Calu3 (cell line): ENCODE measurements at regions of chr1 and their contacts with region 1.

Region 1: DNA sequence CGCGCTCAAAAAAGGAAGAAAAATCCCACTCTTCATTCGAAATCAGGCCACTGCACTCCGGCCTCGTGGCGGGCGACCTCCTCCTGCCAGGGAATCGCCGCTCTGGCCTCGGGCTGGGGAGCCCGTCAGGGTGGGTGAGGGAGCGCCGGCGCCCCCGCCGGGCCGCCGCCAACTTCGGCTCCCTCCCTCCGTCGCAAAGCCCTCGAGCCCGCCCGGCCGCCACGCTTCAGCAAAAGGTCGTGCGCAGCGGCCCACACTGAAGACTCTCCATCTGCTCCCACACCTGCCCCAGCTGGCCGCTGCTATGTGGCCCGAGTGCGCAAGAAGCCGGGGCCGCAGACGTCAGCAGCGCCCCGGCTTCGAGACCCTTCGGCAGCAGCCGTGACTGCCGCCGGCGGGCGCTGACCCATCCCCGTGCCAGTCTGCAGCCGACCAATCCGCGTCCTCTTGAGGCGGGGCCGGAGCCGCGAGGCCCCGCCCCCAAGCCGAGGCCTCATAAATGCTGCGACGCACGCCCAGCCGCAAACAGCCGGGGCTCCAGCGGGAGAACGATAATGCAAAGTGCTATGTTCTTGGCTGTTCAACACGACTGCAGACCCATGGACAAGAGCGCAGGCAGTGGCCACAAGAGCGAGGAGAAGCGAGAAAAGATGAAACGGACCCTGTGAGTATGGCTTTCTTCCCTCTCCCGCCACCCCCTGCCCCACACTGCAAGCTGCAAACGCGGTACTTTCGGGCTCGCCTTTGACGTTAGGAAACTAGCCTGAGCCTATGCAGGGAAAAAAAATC is at the start of gene RGS2:
- DNase-seq: peak; percentile 94
- H3K4me3 Mint-ChIP-seq: peak within 1 kb of the TSS; percentile 99
- H3K27ac Mint-ChIP-seq: peak within 1 kb of the TSS; percentile 99
- H3K4me1 Mint-ChIP-seq: peaks cover 37% of the 10 kb centered on the region
- H3K27me3 Mint-ChIP-seq: no peaks in the 10 kb centered on the region
- CTCF ChIP-seq: no peak
- total RNA-seq, gene RGS2: 46.9 and 93.2 TPM in 2 replicates

Region 2: DNA sequence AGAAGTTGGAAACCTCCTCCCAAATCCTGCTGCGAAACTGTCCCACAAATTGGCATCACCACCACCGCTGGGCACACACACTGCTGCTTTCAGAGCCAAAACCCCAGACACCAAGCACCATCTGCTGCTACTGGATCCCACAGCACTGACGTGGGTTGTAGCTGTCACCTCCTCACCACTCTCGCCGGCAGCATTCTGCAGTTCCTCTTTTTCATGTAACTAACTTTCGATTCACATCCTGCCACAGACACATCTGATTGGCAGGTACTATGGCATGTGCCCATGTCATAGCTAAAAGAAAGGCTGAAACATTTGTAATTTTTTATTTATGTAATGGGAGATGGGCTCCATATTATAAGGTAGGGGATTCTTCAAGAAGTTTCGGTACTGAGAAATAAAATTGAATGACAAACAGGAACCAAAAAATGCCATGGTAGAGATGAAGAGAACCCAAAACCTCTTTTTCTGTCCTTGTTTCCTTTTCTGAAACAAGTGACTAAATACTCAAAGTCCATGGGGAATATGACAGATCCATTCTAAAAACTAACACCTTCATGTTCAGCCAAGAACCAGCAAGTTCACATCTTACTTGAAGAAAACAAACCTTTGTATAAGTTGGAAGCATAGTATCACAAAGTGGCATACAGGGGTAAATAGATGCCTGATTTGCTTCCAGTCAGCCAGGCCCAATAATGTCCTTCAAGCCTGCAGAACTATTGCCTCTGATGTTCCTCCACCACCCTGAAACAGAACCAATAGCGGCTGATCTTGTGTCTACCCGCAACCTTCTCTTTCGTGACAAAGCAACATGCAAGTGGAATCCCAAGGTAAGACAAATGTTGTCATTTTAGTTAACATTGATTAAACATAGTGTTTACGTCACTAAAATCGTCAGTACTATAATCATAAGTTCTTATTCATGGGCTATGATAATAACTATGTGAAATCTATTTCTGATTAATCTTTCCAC is 199.3 kb before region 1 on chr1:
- CTCF ChIA-PET with region 1: interaction called, 13 read pairs
- intact Hi-C with region 1: loop called (anchors 5 kb)
- DNase-seq: no peak
- H3K4me3 Mint-ChIP-seq: no peak overlapping the region
- H3K27ac Mint-ChIP-seq: no peak overlapping the region
- H3K4me1 Mint-ChIP-seq: peaks cover 9% of the 10 kb centered on the region
- H3K27me3 Mint-ChIP-seq: no peaks in the 10 kb centered on the region
- CTCF ChIP-seq: no peak

Region 3: GRCh38 chr1:192700834-192701271 is 107.9 kb before region 1 on chr1:
- CTCF ChIA-PET with region 1: interaction called, 16 read pairs
- intact Hi-C with region 1: loop called (anchors 1 kb)
- DNase-seq: peak; percentile 38
- H3K4me3 Mint-ChIP-seq: no peak overlapping the region
- H3K27ac Mint-ChIP-seq: peak overlapping the region; percentile 86
- H3K4me1 Mint-ChIP-seq: peaks cover 14% of the 10 kb centered on the region
- H3K27me3 Mint-ChIP-seq: no peaks in the 10 kb centered on the region
- CTCF ChIP-seq: no peak

Region 4: GRCh38 chr1:192766009-192766625 is 42.6 kb before region 1 on chr1:
- CTCF ChIA-PET with region 1: no interaction called
- intact Hi-C with region 1: no loop called
- DNase-seq: no peak
- H3K4me3 Mint-ChIP-seq: no peak overlapping the region
- H3K27ac Mint-ChIP-seq: no peak overlapping the region
- H3K4me1 Mint-ChIP-seq: peaks cover 27% of the 10 kb centered on the region
- H3K27me3 Mint-ChIP-seq: no peaks in the 10 kb centered on the region
- CTCF ChIP-seq: no peak

Region 5: DNA sequence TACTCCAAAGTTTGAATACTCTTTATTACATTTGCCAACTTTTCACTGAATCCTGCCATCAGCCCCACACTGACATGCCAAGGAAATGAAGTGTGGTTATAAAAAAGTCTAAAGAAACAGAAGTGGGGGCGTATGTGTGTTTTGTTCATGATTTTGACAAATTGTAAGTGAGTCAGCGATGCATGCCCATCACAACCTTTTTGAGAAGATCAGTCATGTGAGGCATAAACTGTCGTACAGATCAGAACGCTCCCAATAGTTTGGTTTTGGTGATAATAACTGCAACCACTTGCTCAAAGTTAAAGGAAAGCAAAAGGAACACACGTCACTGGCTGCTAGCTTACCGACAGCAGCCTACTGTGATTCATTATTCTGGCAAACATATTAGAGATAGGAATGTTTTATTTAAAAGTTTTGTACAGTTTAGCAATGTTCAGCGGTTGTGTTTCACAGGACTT is 95.8 kb after region 1 on chr1:
- CTCF ChIA-PET with region 1: interaction called, 8 read pairs
- intact Hi-C with region 1: loop called (anchors 2 kb)
- DNase-seq: peak; percentile 10
- H3K4me3 Mint-ChIP-seq: peak overlapping the region; percentile 13
- H3K27ac Mint-ChIP-seq: peak overlapping the region; percentile 29
- H3K4me1 Mint-ChIP-seq: no peaks in the 10 kb centered on the region
- H3K27me3 Mint-ChIP-seq: no peaks in the 10 kb centered on the region
- CTCF ChIP-seq: no peak

Region 6: DNA sequence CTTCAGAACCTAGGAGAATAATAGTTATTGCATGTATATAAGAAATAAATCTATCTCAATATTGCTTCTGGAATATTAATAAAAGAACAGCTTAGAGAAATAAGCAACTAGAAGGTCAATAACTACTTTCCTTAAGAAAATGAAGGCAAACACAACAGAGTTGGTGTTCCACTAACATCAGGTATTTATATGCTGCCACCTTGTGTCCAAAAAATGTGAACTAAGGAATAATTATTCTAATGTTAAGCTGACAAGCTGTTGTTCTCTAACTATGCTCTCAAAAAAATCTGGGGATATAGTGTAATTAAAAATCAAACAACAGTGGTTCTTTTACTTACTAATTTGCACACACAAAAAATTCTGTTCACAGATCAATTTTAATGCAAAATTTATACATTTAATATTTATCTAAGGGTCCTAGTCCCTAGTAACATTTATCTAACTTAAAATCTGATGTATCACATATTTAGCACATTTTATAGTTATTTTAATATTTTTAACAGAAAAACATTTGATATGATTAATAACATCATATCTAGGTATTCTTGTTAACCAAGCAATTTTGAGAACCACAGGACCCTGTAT is 210.8 kb after region 1 on chr1:
- CTCF ChIA-PET with region 1: interaction called, 47 read pairs
- intact Hi-C with region 1: loop called (anchors 1 kb)
- DNase-seq: peak; percentile 27
- H3K4me3 Mint-ChIP-seq: no peak overlapping the region
- H3K27ac Mint-ChIP-seq: no peak overlapping the region
- H3K4me1 Mint-ChIP-seq: no peaks in the 10 kb centered on the region
- H3K27me3 Mint-ChIP-seq: no peaks in the 10 kb centered on the region
- CTCF ChIP-seq: peak; percentile 58

Region 7: GRCh38 chr1:193121616-193122593 is 313.2 kb after region 1 on chr1 and contains the start of gene CDC73:
- CTCF ChIA-PET with region 1: no interaction called
- intact Hi-C with region 1: loop called (anchors 5 kb)
- DNase-seq: peak; percentile 100
- H3K4me3 Mint-ChIP-seq: peak within 1 kb of the TSS; percentile 80
- H3K27ac Mint-ChIP-seq: peak within 1 kb of the TSS; percentile 84
- H3K4me1 Mint-ChIP-seq: peaks cover 25% of the 10 kb centered on the region
- H3K27me3 Mint-ChIP-seq: no peaks in the 10 kb centered on the region
- CTCF ChIP-seq: peak; percentile 94
- total RNA-seq, gene CDC73: 70.7 and 75.2 TPM in 2 replicates